Naive thymus-derived CD4-positive, alpha-beta T cell (primary cell): ENCODE measurements at regions of chr11 and their contacts with region 1.

Region 1: GRCh38 chr11:57530596-57531507 is at the start of gene TIMM10:
- DNase-seq: peak; percentile 71 to 98 (median 95)
- ATAC-seq: peak; percentile 95
- H3K4me3 ChIP-seq: peak within 1 kb of the TSS; percentile 73
- H3K4me3 Mint-ChIP-seq: peak within 1 kb of the TSS; percentile 86 to 95 (median 91)
- H3K27ac ChIP-seq: peak within 1 kb of the TSS; percentile 91
- H3K27ac Mint-ChIP-seq: peak within 1 kb of the TSS; percentile 87 to 98 (median 95)
- H3K4me1 ChIP-seq: peaks cover 15 to 17% of the 10 kb centered on the region in 2 donors
- H3K4me1 Mint-ChIP-seq: peaks cover 6 to 43% (median 33%) of the 10 kb centered on the region in 7 donors
- H3K27me3 ChIP-seq: no peaks in the 10 kb centered on the region
- H3K27me3 Mint-ChIP-seq: no peaks in the 10 kb centered on the region
- total RNA-seq, gene TIMM10: 23.7 to 52.8 (median 34.7) TPM

Region 2: GRCh38 chr11:57335343-57336110 is 195.3 kb before region 1 on chr11 and contains the start of gene SSRP1:
- CTCF ChIA-PET with region 1: interaction called, 4 read pairs
- POLR2A ChIA-PET with region 1: interaction called, 4 read pairs
- intact Hi-C with region 1: loop called (anchors 1 kb)
- DNase-seq: peak; percentile 64 to 90 (median 85)
- ATAC-seq: peak; percentile 99
- H3K4me3 ChIP-seq: peak within 1 kb of the TSS; percentile 77
- H3K4me3 Mint-ChIP-seq: peak within 1 kb of the TSS; percentile 91 to 98 (median 96)
- H3K27ac ChIP-seq: peak within 1 kb of the TSS; percentile 91
- H3K27ac Mint-ChIP-seq: peak within 1 kb of the TSS; percentile 96 to 100 (median 99)
- H3K4me1 ChIP-seq: peaks cover 15 to 19% of the 10 kb centered on the region in 2 donors
- H3K4me1 Mint-ChIP-seq: peaks cover 18 to 44% (median 35%) of the 10 kb centered on the region in 7 donors
- H3K27me3 ChIP-seq: no peaks in the 10 kb centered on the region
- H3K27me3 Mint-ChIP-seq: peaks cover 0 to 2% (median 0%) of the 10 kb centered on the region in 5 donors
- total RNA-seq, gene SSRP1: 46.9 to 146 (median 70.1) TPM

Region 3: DNA sequence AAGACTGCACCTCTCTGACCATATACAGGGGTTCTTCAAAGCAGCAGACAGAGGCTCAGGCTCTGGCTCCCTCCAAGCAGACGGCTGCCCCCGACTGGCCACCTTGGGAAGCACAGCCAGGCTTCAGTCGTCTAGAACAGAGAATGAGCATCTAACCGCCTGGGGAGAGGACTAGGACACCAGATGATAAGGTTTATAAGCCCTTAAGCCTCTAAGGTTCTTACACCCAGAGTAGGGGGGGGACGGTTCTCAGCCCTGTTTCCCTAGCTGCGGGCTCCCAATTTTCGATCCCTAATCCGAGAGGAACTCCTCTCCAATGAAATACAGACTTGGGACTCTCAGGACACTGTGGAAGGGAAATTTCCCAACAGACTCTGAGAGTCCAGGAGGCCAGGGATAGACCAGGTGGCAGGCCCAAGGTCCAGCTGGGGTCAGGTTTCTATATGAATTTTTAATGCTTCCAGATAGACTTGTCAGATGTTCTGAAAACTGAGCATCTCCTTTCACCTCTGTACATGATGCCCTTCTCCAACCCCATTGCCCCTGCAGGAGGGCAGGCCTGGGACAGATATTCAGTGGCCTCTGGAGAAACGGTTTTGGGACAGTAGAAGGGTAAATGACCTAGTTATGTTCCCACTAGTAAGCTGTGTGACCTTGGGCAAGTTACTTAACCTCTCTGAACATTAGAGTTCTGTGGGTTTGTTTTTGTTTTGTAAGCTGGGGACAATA is 50.3 kb before region 1 on chr11:
- CTCF ChIA-PET with region 1: interaction called, 10 read pairs
- POLR2A ChIA-PET with region 1: interaction called, 3 read pairs
- intact Hi-C with region 1: loop called in 1 of 2 experiments (anchors 2 kb)
- DNase-seq: peak in 8 of 9 donors; percentile 30 to 75 (median 49)
- ATAC-seq: peak; percentile 58
- H3K4me3 ChIP-seq: no peak overlapping the region
- H3K4me3 Mint-ChIP-seq: peak overlapping the region in 1 of 10 donors; percentile 15
- H3K27ac ChIP-seq: no peak overlapping the region
- H3K27ac Mint-ChIP-seq: peak overlapping the region in 1 of 9 donors; percentile 49
- H3K4me1 ChIP-seq: peaks cover 10 to 19% of the 10 kb centered on the region in 2 donors
- H3K4me1 Mint-ChIP-seq: peaks cover 0 to 28% (median 18%) of the 10 kb centered on the region in 7 donors
- H3K27me3 ChIP-seq: no peaks in the 10 kb centered on the region
- H3K27me3 Mint-ChIP-seq: peaks cover 0 to 67% (median 16%) of the 10 kb centered on the region in 5 donors

Region 4: DNA sequence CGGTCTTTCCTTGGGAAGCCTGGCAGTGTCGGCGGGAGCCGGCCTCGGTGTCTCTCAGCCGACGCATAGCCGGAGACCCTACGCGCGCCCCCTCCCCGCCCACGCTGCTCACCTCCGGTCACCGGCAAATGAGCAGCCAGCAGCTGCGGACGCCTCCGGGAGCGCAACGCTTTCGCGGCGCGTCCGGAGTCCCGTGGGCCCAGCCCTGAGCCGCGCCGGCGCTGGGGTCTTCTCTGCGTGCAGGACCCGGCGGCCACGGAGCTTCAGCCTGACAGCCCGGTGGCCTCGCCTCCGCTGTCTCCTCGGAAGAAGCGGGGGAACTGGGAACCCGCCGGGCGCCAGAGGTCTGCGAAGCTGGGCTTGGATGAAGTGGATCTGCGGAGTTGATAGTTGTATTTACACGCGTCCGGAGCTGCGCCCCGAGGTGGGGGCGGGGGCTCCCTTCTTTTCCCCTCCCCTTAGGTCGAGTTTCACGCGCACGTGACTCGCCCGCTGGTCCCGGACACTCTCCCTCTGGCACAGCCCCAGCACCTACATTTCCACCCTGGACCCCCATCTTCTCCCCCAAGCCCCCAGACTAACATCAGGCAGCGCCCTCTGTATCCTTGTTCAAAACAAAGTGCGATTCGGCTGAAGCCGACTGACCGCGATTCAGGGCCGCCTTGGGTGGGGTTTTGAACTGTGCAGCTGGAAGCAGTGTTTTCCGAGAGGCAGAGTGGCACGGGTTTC is 15.4 kb before region 1 on chr11 and contains the start of gene SLC43A1:
- CTCF ChIA-PET with region 1: interaction called, 43 read pairs
- POLR2A ChIA-PET with region 1: interaction called, 8 read pairs
- intact Hi-C with region 1: loop called (anchors 1 kb)
- DNase-seq: peak in 2 of 9 donors; percentile 17 to 54
- ATAC-seq: peak; percentile 33
- H3K4me3 ChIP-seq: peak within 1 kb of the TSS; percentile 63
- H3K4me3 Mint-ChIP-seq: peak within 1 kb of the TSS; percentile 95 to 99 (median 98)
- H3K27ac ChIP-seq: peak within 1 kb of the TSS; percentile 63
- H3K27ac Mint-ChIP-seq: peak within 1 kb of the TSS; percentile 69 to 93 (median 78)
- H3K4me1 ChIP-seq: peaks cover 5 to 7% of the 10 kb centered on the region in 2 donors
- H3K4me1 Mint-ChIP-seq: peaks cover 19 to 31% (median 29%) of the 10 kb centered on the region in 7 donors
- H3K27me3 ChIP-seq: no peaks in the 10 kb centered on the region
- H3K27me3 Mint-ChIP-seq: peaks cover 0 to 10% (median 0%) of the 10 kb centered on the region in 5 donors
- total RNA-seq, gene SLC43A1: 10.1 to 19.2 (median 16.3) TPM

Region 5: DNA sequence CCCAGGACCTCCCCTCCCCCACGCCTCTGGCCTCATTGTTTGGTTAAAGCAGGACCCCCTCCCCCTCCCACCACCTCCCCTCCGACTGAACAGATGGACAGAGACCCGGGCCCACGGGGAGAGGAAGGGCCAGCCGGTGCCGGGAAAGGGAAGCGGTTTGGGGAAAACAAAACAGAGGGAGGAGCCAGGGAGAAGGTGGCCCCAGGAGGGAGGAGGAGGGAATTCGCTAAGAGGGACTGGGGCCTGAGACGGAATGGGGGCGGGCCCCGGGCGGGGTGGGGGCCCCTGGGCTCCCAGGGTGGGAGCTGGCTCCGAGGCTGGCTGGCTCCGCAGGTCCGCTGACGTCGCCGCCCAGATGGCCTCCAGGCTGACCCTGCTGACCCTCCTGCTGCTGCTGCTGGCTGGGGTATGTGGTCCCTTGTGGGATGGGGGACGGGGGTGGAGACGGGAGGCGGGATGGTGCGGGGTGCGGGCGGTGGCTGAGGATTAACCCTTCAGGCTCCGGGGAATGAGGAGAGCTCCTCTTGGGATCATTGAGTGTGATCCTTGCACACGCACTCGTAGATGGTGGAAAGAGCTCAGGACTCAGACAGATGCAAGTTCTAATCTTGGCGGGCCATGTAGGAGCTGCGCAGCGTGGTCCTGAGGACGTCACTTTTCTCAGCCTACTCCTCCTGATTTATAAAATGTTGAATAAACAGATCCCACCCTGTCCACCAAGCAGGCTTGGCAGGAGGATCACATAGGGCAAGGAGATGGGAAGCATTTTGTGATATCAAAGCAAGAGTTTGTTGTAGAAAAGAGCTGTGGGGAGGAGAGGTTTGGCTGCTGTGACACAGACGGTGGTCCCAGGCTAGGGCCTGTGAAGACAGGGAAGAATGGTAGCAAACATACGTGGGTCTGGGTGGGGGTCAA is 67.3 kb after region 1 on chr11:
- CTCF ChIA-PET with region 1: no interaction called
- POLR2A ChIA-PET with region 1: no interaction called
- intact Hi-C with region 1: no loop called
- DNase-seq: no peak
- ATAC-seq: no peak
- H3K4me3 ChIP-seq: no peak overlapping the region
- H3K4me3 Mint-ChIP-seq: peak overlapping the region in 2 of 10 donors; percentile 29 to 35
- H3K27ac ChIP-seq: no peak overlapping the region
- H3K27ac Mint-ChIP-seq: peak overlapping the region in 1 of 9 donors; percentile 6
- H3K4me1 ChIP-seq: no peaks in the 10 kb centered on the region
- H3K4me1 Mint-ChIP-seq: peaks cover 0 to 9% (median 0%) of the 10 kb centered on the region in 7 donors
- H3K27me3 ChIP-seq: no peaks in the 10 kb centered on the region
- H3K27me3 Mint-ChIP-seq: peaks cover 27 to 48% (median 34%) of the 10 kb centered on the region in 5 donors

Region 6: GRCh38 chr11:57667736-57668435 is 137.0 kb after region 1 on chr11 and contains the start of gene ZDHHC5:
- CTCF ChIA-PET with region 1: interaction called, 4 read pairs
- POLR2A ChIA-PET with region 1: no interaction called
- intact Hi-C with region 1: loop called (anchors 1 kb)
- DNase-seq: peak; percentile 92 to 100 (median 100)
- ATAC-seq: peak; percentile 90
- H3K4me3 ChIP-seq: peak within 1 kb of the TSS; percentile 87
- H3K4me3 Mint-ChIP-seq: peak within 1 kb of the TSS; percentile 84 to 100 (median 91)
- H3K27ac ChIP-seq: peak within 1 kb of the TSS; percentile 97
- H3K27ac Mint-ChIP-seq: peak within 1 kb of the TSS; percentile 97 to 100 (median 98)
- H3K4me1 ChIP-seq: peaks cover 25 to 28% of the 10 kb centered on the region in 2 donors
- H3K4me1 Mint-ChIP-seq: peaks cover 35 to 62% (median 50%) of the 10 kb centered on the region in 7 donors
- H3K27me3 ChIP-seq: no peaks in the 10 kb centered on the region
- H3K27me3 Mint-ChIP-seq: no peaks in the 10 kb centered on the region
- total RNA-seq, gene ZDHHC5: 51.4 to 82.2 (median 59.1) TPM

Region 7: DNA sequence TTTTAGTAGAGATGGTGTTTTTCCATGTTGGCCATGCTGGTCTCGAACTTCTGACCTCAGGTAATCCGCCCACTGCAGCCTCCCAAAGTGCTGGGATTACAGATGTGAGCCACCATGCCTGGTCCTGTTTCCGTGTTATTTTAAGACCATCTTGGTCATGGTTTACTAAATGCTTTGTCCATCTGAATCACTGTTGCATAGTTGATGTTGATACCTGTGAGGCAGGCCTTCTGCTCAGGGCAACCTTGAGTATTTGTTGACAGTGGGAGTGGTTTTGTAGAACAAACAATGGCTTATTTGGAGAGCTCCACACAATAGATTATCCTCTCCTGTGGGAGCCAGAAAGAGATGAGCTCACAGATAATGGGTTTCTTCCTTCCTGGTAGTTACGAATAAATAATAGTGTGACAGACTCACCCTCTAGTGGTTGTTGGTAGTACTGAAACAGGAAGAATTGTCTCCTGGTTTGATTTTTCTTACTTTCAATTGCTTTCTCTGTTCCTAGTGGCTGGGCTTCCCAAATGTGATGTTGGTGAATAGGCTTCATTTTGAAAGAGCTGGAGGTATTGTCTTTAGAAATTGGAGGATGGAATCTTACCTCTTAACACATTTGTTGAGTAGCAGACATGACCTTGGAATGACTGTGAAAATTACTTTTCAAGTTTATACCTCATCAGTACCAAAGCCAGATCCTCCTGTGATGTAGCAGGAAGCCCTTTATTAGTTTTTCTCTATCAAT is 269.8 kb after region 1 on chr11:
- CTCF ChIA-PET with region 1: no interaction called
- POLR2A ChIA-PET with region 1: no interaction called
- intact Hi-C with region 1: loop called in 1 of 2 experiments (anchors 1 kb)
- DNase-seq: peak in 7 of 9 donors; percentile 46 to 70 (median 64)
- ATAC-seq: peak; percentile 93
- H3K4me3 ChIP-seq: no peak overlapping the region
- H3K4me3 Mint-ChIP-seq: peak overlapping the region in 6 of 10 donors; percentile 33 to 57 (median 54)
- H3K27ac ChIP-seq: peak overlapping the region; percentile 39
- H3K27ac Mint-ChIP-seq: peak overlapping the region; percentile 42 to 92 (median 80)
- H3K4me1 ChIP-seq: peaks cover 8 to 10% of the 10 kb centered on the region in 2 donors
- H3K4me1 Mint-ChIP-seq: peaks cover 22 to 40% (median 30%) of the 10 kb centered on the region in 7 donors
- H3K27me3 ChIP-seq: no peaks in the 10 kb centered on the region
- H3K27me3 Mint-ChIP-seq: no peaks in the 10 kb centered on the region